Activated CD4-positive, alpha-beta memory T cell treated with anti-CD3 and anti-CD28 coated beads, Interleukin-2, amount 10 ng/mL, durations not matched to agents 7 days and 5 days (primary cell): ENCODE measurements at regions of chr7 and their contacts with region 1.

Region 1: DNA sequence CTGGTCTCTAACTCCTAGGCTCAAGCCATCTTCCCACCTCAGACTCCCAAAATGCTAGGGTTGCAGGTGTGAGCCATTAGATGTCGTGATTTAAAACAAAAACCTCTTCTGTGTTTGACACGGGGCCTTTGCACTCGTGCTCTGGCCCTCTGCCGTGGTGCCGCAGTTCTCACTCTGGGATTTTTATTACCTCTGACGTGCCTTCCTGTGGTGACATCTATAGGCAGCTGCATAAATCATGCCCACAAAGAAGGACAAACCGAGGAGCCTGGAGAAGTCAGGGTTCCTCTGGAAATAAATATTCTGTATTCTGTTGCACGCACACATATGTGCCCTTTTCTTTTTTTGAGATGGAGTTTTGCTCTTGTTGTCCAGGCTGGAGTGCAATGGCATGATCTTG is 25.9 kb upstream of the OCM start:
- DNase-seq: no peak
- H3K4me3 Mint-ChIP-seq: no peak overlapping the region
- H3K27ac Mint-ChIP-seq: no peak overlapping the region
- H3K4me1 Mint-ChIP-seq: peaks cover 28% of the 10 kb centered on the region
- H3K27me3 Mint-ChIP-seq: no peaks in the 10 kb centered on the region

Region 2: DNA sequence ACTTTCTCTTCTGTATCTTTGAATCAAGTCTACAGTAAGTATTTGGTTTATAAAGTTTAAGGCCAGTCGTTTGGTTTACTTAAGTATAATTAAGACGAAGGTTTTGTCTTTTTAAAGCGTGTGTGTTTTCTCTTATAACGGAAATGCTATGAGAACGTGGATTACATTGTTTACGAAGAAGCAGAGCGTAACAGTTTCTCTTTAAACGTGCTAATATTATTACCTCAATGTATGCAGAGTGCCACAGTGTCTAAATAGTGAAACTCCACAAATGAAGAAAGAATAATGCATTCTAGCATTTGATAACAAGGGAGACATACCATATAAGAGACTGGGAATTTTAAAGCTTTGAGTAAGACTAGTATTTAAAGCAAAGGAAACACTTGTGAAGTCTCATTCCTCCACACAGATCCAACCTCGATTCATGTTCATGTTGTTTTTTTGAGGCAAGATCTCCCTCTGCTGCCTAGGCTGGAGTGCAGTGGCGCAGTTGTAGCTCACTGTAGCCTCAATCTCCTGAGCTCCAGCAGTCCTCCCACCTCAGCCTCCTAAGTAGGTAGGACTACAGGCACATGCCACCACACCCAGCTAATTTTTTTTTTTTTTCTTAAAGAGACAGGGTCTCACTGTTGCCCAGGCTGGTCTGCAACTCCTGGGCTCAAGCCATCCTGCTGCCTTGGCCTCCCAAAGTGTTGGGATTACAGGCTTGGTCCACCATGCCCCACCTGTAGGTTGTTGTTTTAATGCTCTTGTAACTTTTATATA is 251.6 kb after region 1 on chr7:
- CTCF ChIA-PET with region 1: interaction called, 18 read pairs
- POLR2A ChIA-PET with region 1: interaction called, 4 read pairs
- DNase-seq: peak; percentile 59
- H3K4me3 Mint-ChIP-seq: peak overlapping the region; percentile 95
- H3K27ac Mint-ChIP-seq: peak overlapping the region; percentile 95
- H3K4me1 Mint-ChIP-seq: peaks cover 36% of the 10 kb centered on the region
- H3K27me3 Mint-ChIP-seq: no peaks in the 10 kb centered on the region

Region 3: DNA sequence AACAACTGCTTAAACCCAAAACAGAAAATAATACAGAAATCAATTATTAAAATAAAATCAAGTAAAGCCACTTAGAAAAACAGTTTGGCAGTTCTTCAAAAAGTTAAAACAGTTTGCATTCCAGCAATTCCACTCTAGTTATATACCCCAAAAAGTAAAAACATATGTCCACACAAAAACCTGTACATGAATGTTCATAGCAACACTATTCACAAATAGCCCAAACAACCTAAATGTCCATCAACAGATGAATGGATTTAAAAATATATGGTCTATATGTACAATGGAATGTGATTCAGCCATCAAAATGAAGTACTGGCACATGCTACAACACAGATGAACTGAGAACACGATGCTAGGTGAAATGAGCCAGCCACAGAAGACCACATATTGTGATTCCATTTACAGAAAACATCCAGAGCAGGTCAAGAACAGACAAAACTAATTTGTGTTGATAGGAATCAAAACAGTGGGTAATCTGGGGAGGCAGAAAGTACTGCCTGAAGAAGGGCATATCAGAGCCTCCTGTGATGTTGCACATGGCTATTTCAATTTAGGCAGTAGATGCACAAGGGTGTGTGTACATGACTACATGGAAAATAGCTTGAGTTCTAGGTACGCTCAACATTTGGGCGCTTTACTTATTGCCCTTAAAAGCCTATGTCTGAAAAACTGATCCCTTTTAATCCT is 351.4 kb after region 1 on chr7:
- CTCF ChIA-PET with region 1: no interaction called
- POLR2A ChIA-PET with region 1: no interaction called
- DNase-seq: no peak
- H3K4me3 Mint-ChIP-seq: no peak overlapping the region
- H3K27ac Mint-ChIP-seq: no peak overlapping the region
- H3K4me1 Mint-ChIP-seq: no peaks in the 10 kb centered on the region
- H3K27me3 Mint-ChIP-seq: peaks cover 9% of the 10 kb centered on the region

Region 4: GRCh38 chr7:6323967-6324701 is 469.4 kb after region 1 on chr7:
- CTCF ChIA-PET with region 1: interaction called, 19 read pairs
- POLR2A ChIA-PET with region 1: no interaction called
- DNase-seq: no peak
- H3K4me3 Mint-ChIP-seq: no peak overlapping the region
- H3K27ac Mint-ChIP-seq: no peak overlapping the region
- H3K4me1 Mint-ChIP-seq: peaks cover 2% of the 10 kb centered on the region
- H3K27me3 Mint-ChIP-seq: no peaks in the 10 kb centered on the region